Dendritic cell treated with granulocyte-macrophage colony-stimulating factor and Interleukin-4, amounts not matched to agents 40 ng/mL and 50 ng/mL, for 4 days (primary cell): ENCODE measurements at regions of chr11 and their contacts with region 1.

Region 1: GRCh38 chr11:62911137-62912130 is 9.7 kb downstream of the CHRM1 start:
- H3K4me3 Mint-ChIP-seq: no peak overlapping the region
- H3K27ac Mint-ChIP-seq: no peak overlapping the region
- H3K4me1 Mint-ChIP-seq: peaks cover under 1% of the 10 kb centered on the region
- H3K27me3 Mint-ChIP-seq: peaks cover 20% of the 10 kb centered on the region

Region 2: GRCh38 chr11:62689421-62690183 is 221.8 kb before region 1 on chr11 and contains the start of gene LRRN4CL:
- intact Hi-C with region 1: no loop called
- H3K4me3 Mint-ChIP-seq: no peak within 1 kb of the TSS
- H3K27ac Mint-ChIP-seq: no peak within 1 kb of the TSS
- H3K4me1 Mint-ChIP-seq: peaks cover 11% of the 10 kb centered on the region
- H3K27me3 Mint-ChIP-seq: peaks cover 32% of the 10 kb centered on the region

Region 3: GRCh38 chr11:62880803-62881578 is 30.4 kb before region 1 on chr11 and contains the start of gene SLC3A2:
- intact Hi-C with region 1: no loop called
- H3K4me3 Mint-ChIP-seq: peak within 1 kb of the TSS; percentile 96
- H3K27ac Mint-ChIP-seq: peak within 1 kb of the TSS; percentile 99
- H3K4me1 Mint-ChIP-seq: peaks cover 54% of the 10 kb centered on the region
- H3K27me3 Mint-ChIP-seq: no peaks in the 10 kb centered on the region

Region 4: GRCh38 chr11:62974848-62975522 is 63.6 kb after region 1 on chr11:
- intact Hi-C with region 1: no loop called
- H3K4me3 Mint-ChIP-seq: no peak overlapping the region
- H3K27ac Mint-ChIP-seq: no peak overlapping the region
- H3K4me1 Mint-ChIP-seq: no peaks in the 10 kb centered on the region
- H3K27me3 Mint-ChIP-seq: peaks cover 26% of the 10 kb centered on the region

Region 5: DNA sequence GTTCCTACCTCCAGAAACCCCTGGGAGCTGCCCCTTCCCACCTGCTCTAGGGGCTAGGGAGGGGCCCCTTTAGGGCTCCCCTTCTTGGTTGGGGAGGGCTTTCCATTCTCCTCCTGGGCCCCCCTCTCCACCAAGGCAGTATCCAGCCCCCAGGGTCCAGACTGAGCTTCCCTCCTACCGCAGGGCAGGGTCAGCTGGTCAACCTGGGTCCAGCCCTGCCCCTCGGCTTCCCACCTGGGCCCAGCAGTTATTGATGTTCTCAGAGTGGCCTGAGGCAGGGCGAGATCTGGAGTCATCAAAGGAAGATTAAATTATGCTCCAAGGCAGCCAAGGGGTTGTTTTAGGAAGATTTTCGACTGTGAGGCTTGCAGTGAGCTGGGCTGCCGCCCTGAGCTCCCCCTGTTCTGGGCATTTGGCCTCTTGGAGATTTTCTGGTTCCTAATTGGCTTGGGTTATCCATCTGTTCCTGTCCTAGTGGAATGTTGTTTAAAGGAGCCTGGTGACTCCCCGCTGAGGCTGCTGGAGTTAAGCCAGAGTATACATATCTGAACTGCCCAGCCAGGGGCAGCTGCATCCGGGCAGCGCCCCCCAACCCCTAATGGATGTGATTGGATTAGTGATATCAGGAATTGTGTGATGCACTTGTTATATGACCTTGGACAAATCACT is 106.0 kb after region 1 on chr11:
- intact Hi-C with region 1: no loop called
- H3K4me3 Mint-ChIP-seq: no peak overlapping the region
- H3K27ac Mint-ChIP-seq: no peak overlapping the region
- H3K4me1 Mint-ChIP-seq: no peaks in the 10 kb centered on the region
- H3K27me3 Mint-ChIP-seq: peaks cover 27% of the 10 kb centered on the region

Region 6: DNA sequence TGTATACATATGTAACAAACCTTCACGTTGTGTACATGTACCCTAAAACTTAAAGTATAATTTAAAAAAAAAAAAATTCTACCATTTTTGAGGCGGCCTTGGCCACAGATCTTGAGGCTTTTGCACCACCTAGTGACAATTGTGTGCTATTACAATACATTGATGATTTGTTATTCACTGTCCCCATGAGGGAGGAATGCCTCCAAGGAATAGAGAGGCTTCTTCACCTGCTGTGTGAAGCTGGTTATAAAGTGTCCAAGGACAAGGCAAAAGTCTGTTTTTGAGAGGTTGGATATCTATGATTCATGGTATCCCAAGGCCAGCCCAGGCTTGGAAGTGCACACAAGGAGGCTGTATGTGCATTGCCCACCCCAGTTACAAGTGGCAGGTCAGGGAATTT is 301.3 kb after region 1 on chr11:
- intact Hi-C with region 1: loop called (anchors 2 kb)
- H3K4me3 Mint-ChIP-seq: no peak overlapping the region
- H3K27ac Mint-ChIP-seq: no peak overlapping the region
- H3K4me1 Mint-ChIP-seq: peaks cover 8% of the 10 kb centered on the region
- H3K27me3 Mint-ChIP-seq: peaks cover 13% of the 10 kb centered on the region